GM12878 (cell line): ENCODE measurements at regions of chr16 and their contacts with region 1.

Region 1: GRCh38 chr16:46673320-46674013 is 15.5 kb downstream of the VPS35 start:
- DNase-seq: peak; percentile 27
- ATAC-seq: peak; percentile 99
- H3K4me3 ChIP-seq: no peak overlapping the region
- H3K27ac ChIP-seq: no peak overlapping the region
- H3K4me1 ChIP-seq: no peaks in the 10 kb centered on the region
- H3K27me3 ChIP-seq: no peaks in the 10 kb centered on the region
- CTCF ChIP-seq: peak; percentile 97 to 99 (median 97); a peak in 5 of 6 replicates
- EP300 ChIP-seq: no peak
- POLR2A ChIP-seq: no peak
- RAD21 ChIP-seq: peak; percentile 95

Region 2: GRCh38 chr16:46496701-46497100 is 176.8 kb before region 1 on chr16:
- CTCF ChIA-PET with region 1: no interaction called
- POLR2A ChIA-PET with region 1: no interaction called
- RAD21 ChIA-PET with region 1: no interaction called
- SMC1A ChIA-PET with region 1: no interaction called
- in situ Hi-C with region 1: no loop called
- intact Hi-C with region 1: no loop called
- DNase-seq: no peak
- ATAC-seq: no peak
- H3K4me3 ChIP-seq: no peak overlapping the region
- H3K27ac ChIP-seq: no peak overlapping the region
- H3K4me1 ChIP-seq: no peaks in the 10 kb centered on the region
- H3K27me3 ChIP-seq: no peaks in the 10 kb centered on the region
- CTCF ChIP-seq: no peak
- EP300 ChIP-seq: no peak
- POLR2A ChIP-seq: no peak
- RAD21 ChIP-seq: no peak

Region 3: DNA sequence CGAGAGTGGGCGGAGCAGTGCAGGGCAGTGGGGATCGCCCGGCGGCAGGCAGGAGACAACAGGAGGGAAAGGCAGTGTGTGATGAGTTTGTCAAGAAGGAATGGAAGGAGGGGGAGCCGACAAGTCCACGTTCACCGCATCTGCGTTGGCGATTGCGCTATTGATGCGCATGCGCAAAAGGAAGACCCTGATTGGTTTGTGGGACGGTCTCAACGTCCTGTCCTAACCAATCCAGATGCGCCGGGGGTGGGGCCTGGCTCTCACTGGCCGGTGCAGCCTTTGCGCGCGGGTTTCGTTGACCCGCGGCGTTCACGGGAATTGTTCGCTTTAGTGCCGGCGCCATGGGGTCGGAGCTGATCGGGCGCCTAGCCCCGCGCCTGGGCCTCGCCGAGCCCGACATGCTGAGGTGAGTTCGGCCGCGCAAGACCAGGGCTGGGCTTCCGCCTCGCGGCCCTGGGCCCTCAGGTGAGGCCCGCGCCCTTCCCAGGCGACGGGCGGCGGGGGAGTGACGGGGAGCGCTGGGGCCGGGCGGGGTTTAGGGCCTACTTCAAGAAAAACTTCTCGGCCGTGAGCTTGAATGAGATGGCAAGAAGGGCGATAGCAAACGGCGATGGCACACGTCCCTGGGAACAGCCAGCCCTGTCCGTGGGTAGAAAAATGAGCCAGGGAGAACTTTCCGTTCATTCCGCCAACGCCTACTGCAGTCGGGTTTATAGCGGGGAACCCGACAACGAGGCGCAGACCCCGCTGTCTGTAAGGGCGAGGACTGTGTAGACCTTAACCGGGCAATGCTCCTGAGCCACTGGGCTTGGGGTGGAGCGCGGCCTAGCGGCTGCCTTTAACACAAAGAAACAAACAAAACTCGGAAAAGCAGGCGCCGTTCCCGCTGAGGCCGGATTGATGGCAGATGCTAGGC is 16.2 kb after region 1 on chr16 and contains the start of gene ORC6:
- CTCF ChIA-PET with region 1: interaction called, 69 read pairs
- POLR2A ChIA-PET with region 1: no interaction called
- RAD21 ChIA-PET with region 1: interaction called, 12 read pairs
- SMC1A ChIA-PET with region 1: interaction called, 23 read pairs
- in situ Hi-C with region 1: no loop called
- intact Hi-C with region 1: no loop called
- DNase-seq: peak; percentile 95
- ATAC-seq: peak; percentile 86
- H3K4me3 ChIP-seq: peak within 1 kb of the TSS; percentile 74
- H3K27ac ChIP-seq: peak within 1 kb of the TSS; percentile 90
- H3K4me1 ChIP-seq: no peaks in the 10 kb centered on the region; the same call in 1 of the 2 replicates
- H3K27me3 ChIP-seq: no peaks in the 10 kb centered on the region
- CTCF ChIP-seq: peak; percentile 50 to 68 (median 54)
- EP300 ChIP-seq: no peak
- POLR2A ChIP-seq: peak; percentile 87
- RAD21 ChIP-seq: peak; percentile 63
- polyA plus RNA-seq, gene ORC6: 25.7 to 37.8 TPM

Region 4: DNA sequence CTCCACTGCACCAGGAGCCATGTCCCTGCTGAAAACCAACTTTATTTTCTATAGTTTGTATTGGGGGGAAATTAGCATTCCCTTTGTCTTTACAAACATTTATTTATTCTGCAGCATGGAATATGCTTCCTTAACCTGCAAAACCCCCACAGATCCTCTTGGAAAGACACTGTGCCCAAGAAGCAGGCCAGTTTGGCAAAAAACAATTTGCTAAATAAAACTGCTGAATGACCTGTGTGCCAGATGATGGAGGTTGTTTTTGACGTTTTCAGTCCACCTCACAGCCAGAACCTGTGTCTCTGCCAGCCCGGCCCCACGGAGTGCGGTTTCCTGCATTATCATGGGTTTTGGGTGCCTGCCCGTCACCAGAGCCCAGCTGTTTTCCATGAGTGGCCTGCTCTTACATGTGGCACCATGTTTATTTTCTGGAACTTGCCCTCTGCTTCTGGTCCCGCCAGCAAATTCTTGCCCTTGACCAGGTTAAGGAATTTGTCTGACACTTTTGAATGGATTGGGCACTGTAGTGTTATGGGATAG is 42.4 kb after region 1 on chr16:
- CTCF ChIA-PET with region 1: no interaction called
- POLR2A ChIA-PET with region 1: no interaction called
- RAD21 ChIA-PET with region 1: no interaction called
- SMC1A ChIA-PET with region 1: no interaction called
- in situ Hi-C with region 1: no loop called
- intact Hi-C with region 1: no loop called
- DNase-seq: no peak
- ATAC-seq: no peak
- H3K4me3 ChIP-seq: no peak overlapping the region
- H3K27ac ChIP-seq: no peak overlapping the region
- H3K4me1 ChIP-seq: peaks cover 10% of the 10 kb centered on the region
- H3K27me3 ChIP-seq: no peaks in the 10 kb centered on the region
- CTCF ChIP-seq: no peak
- EP300 ChIP-seq: no peak
- POLR2A ChIP-seq: no peak
- RAD21 ChIP-seq: no peak

Region 5: GRCh38 chr16:46801428-46802049 is 128.1 kb after region 1 on chr16:
- CTCF ChIA-PET with region 1: interaction called, 112 read pairs
- POLR2A ChIA-PET with region 1: interaction called, 5 read pairs
- RAD21 ChIA-PET with region 1: interaction called, 50 read pairs
- SMC1A ChIA-PET with region 1: interaction called, 70 read pairs
- in situ Hi-C with region 1: no loop called
- intact Hi-C with region 1: no loop called
- DNase-seq: no peak
- ATAC-seq: no peak
- H3K4me3 ChIP-seq: no peak overlapping the region
- H3K27ac ChIP-seq: no peak overlapping the region
- H3K4me1 ChIP-seq: no peaks in the 10 kb centered on the region
- H3K27me3 ChIP-seq: no peaks in the 10 kb centered on the region
- CTCF ChIP-seq: peak in 1 of 3 experiments; percentile 6; a peak in 1 of 6 replicates
- EP300 ChIP-seq: no peak
- POLR2A ChIP-seq: no peak
- RAD21 ChIP-seq: peak; percentile 39; the same call in 1 of the 2 replicates

Region 6: DNA sequence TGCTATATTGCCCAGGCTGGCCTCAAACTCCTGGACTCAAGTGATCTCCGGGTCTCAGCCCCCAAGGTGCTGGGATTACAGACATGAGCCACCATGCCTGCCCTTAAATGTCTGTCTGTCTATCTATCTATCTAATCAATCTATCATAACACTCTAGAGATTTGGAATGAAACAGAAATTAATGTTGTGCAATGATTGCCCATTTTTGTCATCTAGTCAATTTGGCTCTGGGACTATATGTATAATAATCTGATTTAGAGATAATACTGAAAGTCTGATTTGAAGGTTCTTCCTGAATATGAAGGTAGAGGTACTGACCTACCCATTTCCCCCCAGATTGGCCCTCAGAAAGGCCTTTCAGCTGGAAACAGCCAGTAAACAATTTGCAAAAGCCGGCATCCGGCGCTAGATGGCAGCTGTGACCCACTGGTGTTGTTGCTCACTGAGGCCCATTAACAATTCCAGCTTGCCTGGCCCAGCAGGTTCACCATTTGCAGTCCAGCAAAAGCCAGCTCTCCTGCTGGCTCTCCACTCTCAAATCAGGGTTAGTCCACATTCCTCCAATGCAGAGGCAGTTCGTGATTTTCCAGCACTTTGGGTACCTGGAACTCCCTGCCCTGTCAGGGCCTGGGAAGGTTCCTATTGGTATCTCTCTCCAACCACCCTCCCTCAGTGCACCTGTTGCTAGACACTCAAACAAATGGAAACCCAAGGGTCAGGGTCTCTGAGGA is 180.4 kb after region 1 on chr16:
- CTCF ChIA-PET with region 1: interaction called, 63 read pairs
- POLR2A ChIA-PET with region 1: interaction called, 6 read pairs
- RAD21 ChIA-PET with region 1: interaction called, 44 read pairs
- SMC1A ChIA-PET with region 1: interaction called, 26 read pairs
- in situ Hi-C with region 1: no loop called
- intact Hi-C with region 1: loop called (anchors 1 kb)
- DNase-seq: no peak
- ATAC-seq: peak; percentile 88
- H3K4me3 ChIP-seq: no peak overlapping the region
- H3K27ac ChIP-seq: no peak overlapping the region
- H3K4me1 ChIP-seq: peaks cover 4% of the 10 kb centered on the region; the same call in 1 of the 2 replicates
- H3K27me3 ChIP-seq: no peaks in the 10 kb centered on the region
- CTCF ChIP-seq: peak; percentile 87 to 96 (median 91)
- EP300 ChIP-seq: no peak
- POLR2A ChIP-seq: no peak
- RAD21 ChIP-seq: peak; percentile 98

Region 7: DNA sequence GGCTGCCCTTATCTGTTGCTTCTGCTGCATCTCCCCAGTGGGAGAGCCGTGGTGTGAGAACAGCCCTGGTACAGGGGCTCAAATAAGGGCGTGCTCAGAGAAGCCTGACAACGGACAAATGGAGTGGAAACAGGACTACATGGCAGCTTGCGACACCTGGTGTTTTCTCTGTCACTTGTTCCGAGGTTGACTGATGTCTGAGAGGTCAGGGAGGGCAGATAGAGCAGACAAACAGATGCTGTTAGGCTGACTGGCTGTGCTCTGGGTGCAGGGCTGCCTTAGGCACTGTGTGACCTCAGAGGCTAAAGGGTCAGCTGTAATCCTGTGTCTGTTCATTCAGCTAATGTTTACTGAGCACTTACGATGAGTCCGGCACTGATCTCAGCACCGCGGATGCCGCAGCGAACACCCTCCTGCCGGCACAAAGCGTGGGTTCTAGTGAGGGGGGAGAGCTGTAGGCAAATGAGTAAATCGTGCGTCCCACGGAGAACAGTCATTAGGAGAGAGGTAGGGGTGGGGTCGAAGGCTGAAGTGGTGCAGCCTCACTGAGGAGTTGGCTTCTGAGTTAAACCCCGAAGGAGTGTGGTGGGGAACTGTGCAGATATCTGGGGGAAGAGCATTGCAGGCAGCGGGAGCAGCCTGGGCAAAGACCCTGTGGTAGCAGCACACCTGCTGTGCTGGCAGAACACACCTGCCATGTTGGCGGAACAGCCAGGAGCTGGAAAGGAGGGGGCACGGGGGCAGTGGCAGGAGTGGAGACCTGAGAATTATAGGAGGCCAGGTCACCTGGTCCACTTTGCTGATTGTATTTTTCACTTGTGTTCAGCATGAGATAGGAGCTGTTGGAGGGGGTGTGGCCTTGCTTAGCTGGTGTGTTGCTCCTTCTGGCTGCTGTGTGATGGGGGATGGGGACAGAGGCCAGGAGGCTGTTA is 245.7 kb after region 1 on chr16:
- CTCF ChIA-PET with region 1: interaction called, 73 read pairs
- POLR2A ChIA-PET with region 1: no interaction called
- RAD21 ChIA-PET with region 1: interaction called, 4 read pairs
- SMC1A ChIA-PET with region 1: interaction called, 45 read pairs
- in situ Hi-C with region 1: no loop called
- intact Hi-C with region 1: no loop called
- DNase-seq: peak; percentile 54
- ATAC-seq: peak; percentile 84
- H3K4me3 ChIP-seq: peak overlapping the region; percentile 37; the same call in 1 of the 2 replicates
- H3K27ac ChIP-seq: 0 out of 2 replicates have a peak overlapping the region, but pooled peaks have one; percentile 39
- H3K4me1 ChIP-seq: peaks cover 19% of the 10 kb centered on the region
- H3K27me3 ChIP-seq: no peaks in the 10 kb centered on the region
- CTCF ChIP-seq: peak; percentile 37 to 67 (median 51); a peak in 5 of 6 replicates
- EP300 ChIP-seq: no peak
- POLR2A ChIP-seq: peak; percentile 51
- RAD21 ChIP-seq: peak; percentile 69